Activated CD4-positive, alpha-beta T cell treated with anti-CD3 and anti-CD28 coated beads, Interleukin-2, amount 10 ng/mL, durations not matched to agents 24 days and 14 days (primary cell): ENCODE measurements at regions of chr12 and their contacts with region 1.

Region 1: DNA sequence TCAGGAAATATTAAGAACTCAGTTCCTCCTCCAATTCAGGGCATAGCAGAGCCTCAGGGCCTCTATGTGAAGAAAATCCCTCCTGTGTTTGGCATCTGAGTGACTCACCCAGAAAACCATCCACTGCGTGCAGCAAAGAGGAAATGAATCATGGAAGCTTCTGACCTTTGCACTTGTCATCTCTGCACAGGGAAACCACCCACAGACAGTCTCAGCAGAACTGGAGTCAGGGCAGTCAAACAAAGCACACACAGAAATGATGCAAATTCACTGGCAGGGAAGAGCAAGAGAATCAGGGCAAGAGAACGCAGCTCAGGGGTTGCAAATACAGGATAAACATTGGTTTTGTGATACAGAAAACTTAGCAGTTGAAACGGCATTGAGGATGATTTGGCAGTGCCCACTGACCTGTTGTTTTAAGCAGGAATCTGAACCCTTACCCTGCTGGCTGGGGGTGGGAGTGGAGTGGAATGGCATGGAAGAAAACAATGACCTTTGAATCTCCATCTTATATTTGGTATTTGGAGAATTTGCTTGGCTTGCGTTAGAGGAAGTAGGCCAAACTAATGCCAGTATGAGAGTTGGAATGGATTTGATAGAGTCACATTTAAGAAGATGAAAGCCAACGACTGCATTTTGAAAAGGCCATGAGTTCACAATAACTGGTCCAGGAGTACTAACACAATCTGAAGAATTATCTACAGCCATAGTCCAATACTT is 53.5 kb downstream of the PHLDA1 start:
- DNase-seq: peak; percentile 94
- H3K4me3 Mint-ChIP-seq: peak overlapping the region; percentile 69
- H3K27ac Mint-ChIP-seq: peak overlapping the region; percentile 100
- H3K4me1 Mint-ChIP-seq: peaks cover 54% of the 10 kb centered on the region
- H3K27me3 Mint-ChIP-seq: no peaks in the 10 kb centered on the region

Region 2: DNA sequence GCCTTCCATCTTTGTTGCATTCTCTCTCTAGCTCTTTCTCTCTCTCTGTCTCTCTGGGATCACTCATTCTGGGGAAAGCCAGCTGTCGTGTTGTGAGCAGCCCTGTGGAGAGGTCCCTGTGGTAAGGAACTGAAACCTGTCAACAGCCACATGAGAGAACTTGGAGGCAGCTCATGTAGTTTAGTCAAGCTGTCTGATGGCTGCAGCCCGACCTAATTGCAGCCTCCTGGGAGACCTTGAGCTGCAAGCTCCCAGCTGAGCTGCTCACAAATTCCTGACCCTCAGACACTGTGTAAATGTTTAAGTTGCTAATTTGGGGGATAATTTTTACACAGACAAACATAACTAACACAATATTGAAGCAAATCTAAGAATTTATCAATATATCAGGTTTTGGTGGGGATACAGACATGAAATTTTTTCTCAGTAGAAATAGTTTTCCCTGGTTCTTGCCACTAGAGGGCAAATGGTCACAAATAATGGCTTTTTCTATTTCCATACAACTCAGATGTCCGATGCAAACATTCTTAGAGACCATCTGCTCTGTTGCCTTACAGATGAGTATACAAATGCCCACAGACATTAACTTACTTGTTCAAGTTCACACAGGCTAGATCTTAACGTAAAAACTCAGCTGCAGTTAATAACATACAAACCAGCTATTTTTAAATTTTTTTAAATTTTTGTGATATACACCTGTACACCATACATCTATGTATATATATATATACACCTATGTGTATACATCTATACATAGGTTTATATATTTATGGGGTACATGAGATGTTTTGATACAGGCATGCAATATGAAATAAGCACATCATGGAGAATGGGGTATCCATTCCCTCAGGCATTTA is 451.2 kb before region 1 on chr12:
- intact Hi-C with region 1: loop called (anchors 5 kb)
- DNase-seq: peak; percentile 74
- H3K4me3 Mint-ChIP-seq: no peak overlapping the region
- H3K27ac Mint-ChIP-seq: peak overlapping the region; percentile 34
- H3K4me1 Mint-ChIP-seq: peaks cover 7% of the 10 kb centered on the region
- H3K27me3 Mint-ChIP-seq: peaks cover 34% of the 10 kb centered on the region

Region 3: DNA sequence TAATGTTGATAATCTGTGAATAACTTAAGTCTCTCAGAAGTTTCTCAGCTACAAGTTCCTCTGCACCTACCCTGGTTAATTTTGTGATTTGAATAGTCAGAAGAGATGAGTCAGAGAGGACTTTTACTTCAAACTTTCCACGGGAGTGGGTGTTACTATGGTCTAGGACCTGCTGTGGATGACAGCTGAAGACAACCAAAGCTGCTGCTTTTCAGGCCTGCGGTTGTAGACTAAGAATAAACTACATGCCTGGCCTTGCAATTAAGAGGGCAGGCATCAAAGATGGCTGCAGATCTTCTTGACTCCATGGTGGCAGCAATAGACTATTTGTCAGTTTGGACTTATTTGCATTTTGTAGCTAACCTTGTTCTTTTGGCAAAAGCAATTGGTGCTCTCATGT is 239.6 kb before region 1 on chr12:
- intact Hi-C with region 1: loop called (anchors 1 kb)
- DNase-seq: peak; percentile 64
- H3K4me3 Mint-ChIP-seq: no peak overlapping the region
- H3K27ac Mint-ChIP-seq: peak overlapping the region; percentile 59
- H3K4me1 Mint-ChIP-seq: peaks cover 17% of the 10 kb centered on the region
- H3K27me3 Mint-ChIP-seq: peaks cover 5% of the 10 kb centered on the region

Region 4: DNA sequence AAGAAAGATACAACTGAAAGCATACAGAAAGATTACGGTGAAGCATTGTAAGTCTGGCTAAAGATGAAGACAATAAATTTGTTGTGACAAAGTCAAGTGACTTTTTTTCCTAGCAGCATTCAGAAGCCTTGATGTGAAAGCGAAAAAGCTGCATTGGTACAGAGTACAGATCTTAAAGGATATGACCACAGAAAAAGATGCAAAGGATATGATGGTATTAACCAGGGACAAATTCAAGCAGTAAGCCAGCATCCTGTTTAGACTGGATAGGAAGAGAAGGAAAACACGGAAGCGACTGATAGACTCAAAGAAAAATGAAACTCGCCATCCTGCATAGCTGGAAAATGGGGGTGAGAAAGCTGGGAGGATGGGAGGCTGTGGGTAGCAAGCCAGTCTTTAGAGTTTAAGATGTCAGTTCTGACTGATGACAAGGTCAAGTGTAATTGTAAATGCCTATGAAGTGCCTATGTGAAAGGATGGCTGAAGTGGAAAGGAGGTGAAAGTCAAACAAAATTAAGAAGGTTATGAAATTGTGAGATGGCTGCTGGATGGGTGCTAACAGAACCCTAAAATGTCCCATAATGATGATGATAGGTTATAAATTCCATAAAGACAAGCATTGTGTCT is 39.0 kb before region 1 on chr12:
- intact Hi-C with region 1: loop called (anchors 1 kb)
- DNase-seq: peak; percentile 70
- H3K4me3 Mint-ChIP-seq: no peak overlapping the region
- H3K27ac Mint-ChIP-seq: no peak overlapping the region
- H3K4me1 Mint-ChIP-seq: peaks cover 21% of the 10 kb centered on the region
- H3K27me3 Mint-ChIP-seq: no peaks in the 10 kb centered on the region

Region 5: GRCh38 chr12:76020731-76021672 is 42.9 kb after region 1 on chr12:
- intact Hi-C with region 1: loop called (anchors 1 kb)
- DNase-seq: peak; percentile 91
- H3K4me3 Mint-ChIP-seq: peak overlapping the region; percentile 72
- H3K27ac Mint-ChIP-seq: peak overlapping the region; percentile 98
- H3K4me1 Mint-ChIP-seq: peaks cover 51% of the 10 kb centered on the region
- H3K27me3 Mint-ChIP-seq: no peaks in the 10 kb centered on the region

Region 6: GRCh38 chr12:76158518-76159321 is 180.6 kb after region 1 on chr12:
- intact Hi-C with region 1: loop called (anchors 1 kb)
- DNase-seq: peak; percentile 91
- H3K4me3 Mint-ChIP-seq: peak overlapping the region; percentile 6
- H3K27ac Mint-ChIP-seq: peak overlapping the region; percentile 84
- H3K4me1 Mint-ChIP-seq: peaks cover 16% of the 10 kb centered on the region
- H3K27me3 Mint-ChIP-seq: peaks cover 30% of the 10 kb centered on the region